ENCODE measurements at regions of chr1 and their contacts with region 1.

Region 1: GRCh38 chr1:151340870-151341754 is 5.9 kb downstream of the RFX5 start:
- DNase-seq: no peak
- H3K4me3 ChIP-seq: no peak overlapping the region
- H3K27me3 ChIP-seq: no peaks in the 10 kb centered on the region
- CTCF ChIP-seq: peak; percentile 63

Region 2: DNA sequence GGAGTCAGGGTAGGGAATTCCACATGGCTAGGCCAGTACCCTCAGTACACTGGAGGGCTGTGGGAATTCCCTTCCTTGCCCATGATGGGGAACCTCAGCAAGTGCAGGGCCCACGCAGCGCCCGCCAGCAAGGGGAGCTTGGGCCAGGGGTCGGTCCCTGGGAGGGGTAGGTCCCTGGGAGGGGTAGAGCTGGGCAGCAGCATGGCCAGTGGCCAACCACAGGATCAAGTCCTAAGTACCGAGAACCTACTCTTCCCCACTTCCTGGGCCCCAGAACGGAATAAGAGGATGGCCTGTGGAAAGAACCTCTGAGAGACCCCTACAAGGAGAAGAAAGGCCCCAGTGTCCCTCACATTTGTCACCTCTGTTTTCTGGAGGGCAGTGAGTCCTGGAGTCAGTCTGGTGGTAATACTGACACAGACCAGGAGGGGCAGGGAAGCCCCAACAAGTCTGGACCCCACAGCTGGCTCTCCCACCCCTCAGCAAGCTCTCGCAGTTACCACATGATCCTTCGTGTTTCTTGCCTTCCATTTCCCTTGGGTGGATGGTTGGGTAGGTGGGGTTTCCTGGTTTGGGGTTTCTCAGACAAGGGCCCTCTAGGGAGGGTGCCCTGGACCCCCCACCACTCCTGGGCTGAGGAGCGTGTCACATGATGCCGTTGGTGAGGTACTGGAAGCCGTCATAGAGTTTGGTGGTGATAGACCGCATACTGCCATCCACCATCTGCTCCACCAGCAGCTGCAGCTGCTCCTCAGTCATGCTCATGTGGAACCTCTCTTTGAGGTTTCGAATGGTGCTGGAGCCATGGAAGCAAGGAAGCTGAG is 48.7 kb before region 1 on chr1:
- CTCF ChIA-PET with region 1: interaction called, 267 read pairs
- POLR2A ChIA-PET with region 1: no interaction called
- DNase-seq: no peak
- H3K4me3 ChIP-seq: no peak overlapping the region
- H3K27me3 ChIP-seq: no peaks in the 10 kb centered on the region
- CTCF ChIP-seq: no peak

Region 3: GRCh38 chr1:151311589-151312331 is 29.4 kb before region 1 on chr1:
- CTCF ChIA-PET with region 1: interaction called, 267 read pairs
- POLR2A ChIA-PET with region 1: no interaction called
- DNase-seq: peak; percentile 97
- H3K4me3 ChIP-seq: no peak overlapping the region
- H3K27me3 ChIP-seq: no peaks in the 10 kb centered on the region
- CTCF ChIP-seq: no peak

Region 4: GRCh38 chr1:151327223-151327902 is 13.7 kb before region 1 on chr1 and contains the start of gene PI4KB:
- CTCF ChIA-PET with region 1: interaction called, 65 read pairs
- POLR2A ChIA-PET with region 1: no interaction called
- DNase-seq: peak; percentile 91
- H3K4me3 ChIP-seq: peak within 1 kb of the TSS; percentile 71
- H3K27me3 ChIP-seq: no peaks in the 10 kb centered on the region
- CTCF ChIP-seq: no peak
- polyA plus RNA-seq, gene PI4KB: 71.5 and 98.2 TPM in 2 replicates